IMR-90 (cell line): ENCODE measurements at regions of chr1 and their contacts with region 1.

Region 1: DNA sequence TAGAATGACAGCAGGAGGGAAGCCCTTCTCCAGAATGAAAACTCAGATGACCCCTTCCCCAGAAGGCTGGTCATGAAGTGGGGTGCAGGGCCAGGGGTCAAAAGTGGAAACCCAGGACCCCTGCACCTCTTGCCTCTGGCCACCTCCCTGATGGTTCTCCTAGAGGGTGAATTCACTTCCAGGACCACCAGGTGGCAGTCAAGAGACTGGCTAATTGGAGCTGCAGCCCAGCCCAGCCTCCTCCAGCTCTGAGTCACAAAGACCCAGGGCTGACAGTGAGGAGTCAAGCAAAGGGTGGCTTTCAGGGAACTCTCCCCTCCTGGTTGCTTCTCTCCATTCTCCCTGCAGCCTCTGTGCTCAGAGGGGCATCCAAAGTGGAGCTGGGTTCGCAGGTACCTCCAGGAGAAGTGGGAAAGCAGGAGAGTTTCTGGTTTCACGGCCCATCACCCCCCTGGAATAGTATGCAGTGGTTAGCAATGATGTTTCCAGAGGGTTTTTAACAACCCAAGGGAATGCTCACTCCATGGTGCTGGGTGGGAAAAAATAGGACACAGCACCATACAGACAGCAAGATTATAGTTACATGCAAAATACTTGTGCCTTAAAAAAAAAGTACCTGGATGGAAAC is 6.1 kb upstream of the EPHB2 start:
- DNase-seq: peak; percentile 84
- ATAC-seq: peak; percentile 100
- H3K4me3 ChIP-seq: no peak overlapping the region
- H3K27ac ChIP-seq: no peak overlapping the region
- H3K4me1 ChIP-seq: 0 out of 2 replicates have a peak, but pooled peaks cover 1% of the 10 kb centered on the region
- H3K27me3 ChIP-seq: peaks cover 2% of the 10 kb centered on the region; the same call in 1 of the 2 replicates
- CTCF ChIP-seq: peak; percentile 91
- POLR2A ChIP-seq: 0 out of 2 replicates have a peak, but pooled peaks have one; percentile 33
- RAD21 ChIP-seq: peak; percentile 95

Region 2: DNA sequence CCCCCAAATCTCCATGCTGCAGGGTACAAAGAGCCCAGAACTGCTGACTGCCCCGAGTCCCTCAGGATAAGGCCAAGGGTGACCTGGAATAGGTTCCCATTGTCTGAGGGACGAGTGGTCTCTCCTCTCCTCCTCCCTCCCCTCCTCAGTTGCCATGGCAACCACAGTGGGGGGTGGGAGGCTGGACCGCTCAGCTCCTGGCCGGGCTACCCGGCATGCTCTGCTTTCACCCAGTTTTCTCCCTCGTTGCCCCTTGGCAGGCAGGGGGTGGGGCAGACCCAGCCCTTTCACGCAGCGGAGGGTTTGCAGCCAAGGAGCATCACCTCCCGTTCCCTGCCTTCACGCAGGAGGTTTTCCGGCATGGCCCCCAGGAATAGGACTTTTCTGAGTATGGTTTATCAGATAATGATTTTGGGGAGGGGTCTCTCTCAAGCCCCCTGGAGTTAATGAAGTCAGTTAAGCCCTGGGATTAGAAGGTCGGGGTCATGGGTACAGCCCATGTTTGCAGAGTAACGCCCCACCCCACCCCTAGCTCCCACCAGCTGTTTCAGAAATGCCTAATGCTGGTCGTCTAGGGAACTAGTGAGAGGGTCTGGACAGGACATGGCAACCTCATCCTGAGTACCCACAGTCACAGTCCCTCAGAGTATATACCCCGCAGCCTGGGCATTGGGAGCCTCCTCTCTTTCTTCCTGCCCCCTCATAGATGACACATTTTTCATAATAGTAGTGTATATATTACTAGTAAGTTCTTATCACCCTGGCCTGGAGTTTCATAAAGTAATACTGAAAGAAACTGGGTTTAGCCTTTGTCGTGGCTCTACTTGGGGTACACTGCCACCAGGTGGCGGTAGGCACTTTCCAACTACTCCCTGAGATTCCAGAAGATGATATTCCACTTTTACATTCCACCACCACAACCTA is 30.8 kb before region 1 on chr1:
- CTCF ChIA-PET with region 1: interaction called, 4 read pairs
- POLR2A ChIA-PET with region 1: no interaction called
- dilution Hi-C with region 1: no loop called
- in situ Hi-C with region 1: no loop called
- intact Hi-C with region 1: loop called (anchors 2 kb)
- DNase-seq: peak; percentile 74
- ATAC-seq: peak; percentile 91
- H3K4me3 ChIP-seq: no peak overlapping the region
- H3K27ac ChIP-seq: no peak overlapping the region
- H3K4me1 ChIP-seq: no peaks in the 10 kb centered on the region
- H3K27me3 ChIP-seq: peaks cover 42% of the 10 kb centered on the region
- CTCF ChIP-seq: peak; percentile 96
- POLR2A ChIP-seq: no peak
- RAD21 ChIP-seq: peak; percentile 96

Region 3: DNA sequence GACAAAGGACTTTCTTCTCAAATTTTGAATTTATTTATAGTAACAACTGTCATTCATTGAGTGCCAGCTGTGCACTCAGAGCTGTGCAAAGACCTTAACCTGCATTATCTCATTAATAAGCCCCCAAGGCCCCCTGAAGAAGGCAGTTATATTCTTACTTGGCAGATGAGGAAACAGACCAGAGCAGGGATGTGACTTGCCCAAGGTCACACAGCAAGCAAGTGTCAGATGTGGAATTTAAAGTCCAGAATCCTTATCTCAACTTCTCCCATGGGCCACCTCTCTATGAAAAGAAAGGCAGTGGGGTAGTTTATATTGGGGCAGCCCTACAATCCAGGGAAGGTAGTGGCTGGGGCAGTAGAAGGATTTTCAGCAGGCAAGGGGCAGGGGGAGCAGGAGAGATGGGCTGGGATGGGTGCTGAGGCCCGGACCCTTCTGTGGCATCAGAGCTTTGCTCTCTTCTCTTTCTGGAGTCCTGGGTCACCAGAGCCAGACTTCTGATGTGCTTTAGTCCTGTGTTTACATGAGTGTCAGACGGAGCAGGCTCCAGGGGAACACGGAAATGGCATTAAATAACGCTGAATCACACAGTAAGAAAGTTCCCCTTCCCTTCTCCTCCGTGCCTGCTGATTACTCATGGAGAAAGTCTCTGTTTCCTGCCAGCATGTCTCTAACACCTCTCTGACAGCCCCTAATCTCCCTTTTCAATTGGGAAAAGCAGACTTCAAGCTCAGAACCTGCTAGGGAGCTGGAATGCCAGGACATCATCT is 45.5 kb after region 1 on chr1:
- CTCF ChIA-PET with region 1: interaction called, 4 read pairs
- POLR2A ChIA-PET with region 1: no interaction called
- dilution Hi-C with region 1: no loop called
- in situ Hi-C with region 1: no loop called
- intact Hi-C with region 1: loop called (anchors 2 kb)
- DNase-seq: peak; percentile 98
- ATAC-seq: peak; percentile 85
- H3K4me3 ChIP-seq: no peak overlapping the region
- H3K27ac ChIP-seq: peak overlapping the region; percentile 73
- H3K4me1 ChIP-seq: peaks cover 50% of the 10 kb centered on the region
- H3K27me3 ChIP-seq: no peaks in the 10 kb centered on the region
- CTCF ChIP-seq: no peak
- POLR2A ChIP-seq: peak; percentile 67
- RAD21 ChIP-seq: peak; percentile 0

Region 4: DNA sequence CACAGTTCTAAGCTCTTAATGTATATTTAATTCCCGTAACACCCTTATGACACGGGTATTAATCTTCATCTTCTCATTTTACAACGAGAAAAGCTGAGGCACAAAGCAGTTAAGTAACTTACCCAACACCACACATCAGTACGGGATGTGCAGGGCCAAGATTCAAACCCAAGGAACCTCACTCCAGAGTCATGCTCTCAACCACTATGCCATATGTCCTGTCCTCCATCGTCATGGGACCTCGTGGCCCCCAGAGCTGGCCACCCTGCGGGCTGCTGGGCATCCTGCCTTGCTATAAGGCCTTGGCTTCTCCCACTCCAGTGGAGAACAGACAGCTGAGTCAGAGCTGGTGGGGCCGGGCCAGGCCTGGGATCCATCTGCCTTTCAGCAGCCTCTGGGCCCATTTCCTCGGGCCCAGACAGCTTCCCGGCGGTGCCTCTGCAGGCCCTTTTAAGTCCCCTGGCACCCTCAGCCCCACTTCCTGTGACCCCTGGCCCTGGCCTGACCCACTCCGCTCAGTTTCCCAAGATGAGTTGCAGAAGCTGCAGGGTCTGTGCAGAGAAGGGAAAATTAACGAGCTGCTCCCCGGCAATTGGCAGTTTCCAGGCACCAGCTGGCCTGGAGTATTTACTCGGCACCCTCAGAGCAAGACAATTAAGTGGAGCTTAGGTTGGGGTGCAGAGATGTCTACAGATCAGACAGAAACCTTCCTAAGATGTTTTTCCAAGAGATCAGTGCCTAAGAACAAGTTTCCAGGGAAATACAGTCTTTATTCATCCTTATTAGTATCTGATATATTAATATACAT is 104.3 kb after region 1 on chr1:
- CTCF ChIA-PET with region 1: interaction called, 4 read pairs
- POLR2A ChIA-PET with region 1: no interaction called
- dilution Hi-C with region 1: no loop called
- in situ Hi-C with region 1: no loop called
- intact Hi-C with region 1: loop called (anchors 2 kb)
- DNase-seq: peak; percentile 87
- ATAC-seq: peak; percentile 90
- H3K4me3 ChIP-seq: no peak overlapping the region
- H3K27ac ChIP-seq: peak overlapping the region; percentile 18
- H3K4me1 ChIP-seq: peaks cover 11% of the 10 kb centered on the region
- H3K27me3 ChIP-seq: no peaks in the 10 kb centered on the region
- CTCF ChIP-seq: no peak
- POLR2A ChIP-seq: no peak
- RAD21 ChIP-seq: peak; percentile 31; the same call in 1 of the 2 replicates

Region 5: GRCh38 chr1:22861764-22862440 is 157.3 kb after region 1 on chr1:
- CTCF ChIA-PET with region 1: interaction called, 31 read pairs
- POLR2A ChIA-PET with region 1: no interaction called
- dilution Hi-C with region 1: no loop called
- in situ Hi-C with region 1: no loop called
- intact Hi-C with region 1: loop called (anchors 1 kb)
- DNase-seq: peak; percentile 80
- ATAC-seq: peak; percentile 98
- H3K4me3 ChIP-seq: no peak overlapping the region
- H3K27ac ChIP-seq: peak overlapping the region; percentile 30
- H3K4me1 ChIP-seq: peaks cover 7% of the 10 kb centered on the region
- H3K27me3 ChIP-seq: no peaks in the 10 kb centered on the region
- CTCF ChIP-seq: peak; percentile 94
- POLR2A ChIP-seq: no peak
- RAD21 ChIP-seq: peak; percentile 86

Region 6: GRCh38 chr1:22889213-22889827 is 184.8 kb after region 1 on chr1:
- CTCF ChIA-PET with region 1: interaction called, 6 read pairs
- POLR2A ChIA-PET with region 1: no interaction called
- dilution Hi-C with region 1: no loop called
- in situ Hi-C with region 1: loop called (anchors 10 kb)
- intact Hi-C with region 1: loop called (anchors 1 kb)
- DNase-seq: peak; percentile 51
- ATAC-seq: peak; percentile 70
- H3K4me3 ChIP-seq: no peak overlapping the region
- H3K27ac ChIP-seq: no peak overlapping the region
- H3K4me1 ChIP-seq: peaks cover 5% of the 10 kb centered on the region; the same call in 1 of the 2 replicates
- H3K27me3 ChIP-seq: no peaks in the 10 kb centered on the region
- CTCF ChIP-seq: peak; percentile 74
- POLR2A ChIP-seq: no peak
- RAD21 ChIP-seq: peak; percentile 78

Region 7: DNA sequence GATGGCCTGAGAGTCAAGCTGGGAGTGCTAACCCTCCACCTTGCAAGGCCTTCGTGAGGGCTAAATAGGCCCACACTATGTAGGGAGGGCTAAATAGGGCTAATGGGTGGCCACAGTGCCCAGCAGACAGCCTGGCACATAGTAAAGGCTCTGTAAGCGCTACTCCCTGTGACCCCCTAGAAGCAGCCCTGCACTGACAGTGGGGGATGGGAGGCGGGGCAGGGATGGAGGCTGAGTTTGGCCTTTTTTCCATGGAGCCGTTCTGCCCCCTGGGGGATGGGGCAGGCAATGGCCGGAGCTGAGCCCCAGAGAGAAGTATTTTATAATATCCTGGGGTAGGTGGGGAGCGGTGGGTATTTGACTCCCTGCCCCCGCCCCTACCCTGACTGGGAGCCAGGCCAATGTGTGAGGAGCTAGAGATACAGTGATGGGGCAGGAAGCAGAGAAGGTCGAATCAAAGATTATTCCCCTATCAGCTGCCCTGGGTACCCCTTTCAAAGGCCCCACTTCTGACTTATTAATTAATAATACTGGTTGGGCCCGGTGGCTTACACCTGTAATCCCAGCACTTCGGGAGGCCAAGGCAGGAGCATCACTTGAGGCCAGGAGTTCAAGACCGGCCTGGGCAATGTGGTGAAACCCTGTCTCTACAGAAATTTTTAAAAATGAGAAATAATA is 225.8 kb after region 1 on chr1:
- CTCF ChIA-PET with region 1: interaction called, 5 read pairs
- POLR2A ChIA-PET with region 1: no interaction called
- dilution Hi-C with region 1: no loop called
- in situ Hi-C with region 1: no loop called
- intact Hi-C with region 1: loop called (anchors 1 kb)
- DNase-seq: peak; percentile 17
- ATAC-seq: peak; percentile 96
- H3K4me3 ChIP-seq: no peak overlapping the region
- H3K27ac ChIP-seq: no peak overlapping the region
- H3K4me1 ChIP-seq: no peaks in the 10 kb centered on the region
- H3K27me3 ChIP-seq: peaks cover 43% of the 10 kb centered on the region
- CTCF ChIP-seq: peak; percentile 92
- POLR2A ChIP-seq: no peak
- RAD21 ChIP-seq: peak; percentile 90

Region 8: DNA sequence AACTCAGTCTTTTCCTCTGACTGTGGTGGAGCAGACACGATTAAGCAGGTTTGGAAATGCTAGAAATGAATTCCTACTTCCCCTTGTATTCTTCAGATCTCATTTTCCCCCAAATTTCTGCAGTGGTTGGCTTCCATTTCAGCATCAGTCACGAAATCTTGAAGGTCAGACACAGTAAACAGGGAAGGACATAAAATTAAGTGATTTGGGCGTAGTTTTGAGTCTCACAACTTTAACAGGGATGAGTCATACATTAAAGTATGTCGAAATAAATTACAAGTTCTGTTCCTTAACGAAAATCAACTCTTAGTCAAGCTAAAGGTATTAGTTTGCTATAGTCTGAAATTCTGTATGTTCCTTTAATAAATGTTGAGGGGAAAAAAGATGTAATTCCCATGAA is 578.4 kb after region 1 on chr1:
- CTCF ChIA-PET with region 1: no interaction called
- POLR2A ChIA-PET with region 1: no interaction called
- dilution Hi-C with region 1: no loop called
- in situ Hi-C with region 1: no loop called
- intact Hi-C with region 1: no loop called
- DNase-seq: peak; percentile 79
- ATAC-seq: peak; percentile 72
- H3K4me3 ChIP-seq: no peak overlapping the region
- H3K27ac ChIP-seq: peak overlapping the region; percentile 2; the same call in 1 of the 2 replicates
- H3K4me1 ChIP-seq: peaks cover 8% of the 10 kb centered on the region; the same call in 1 of the 2 replicates
- H3K27me3 ChIP-seq: no peaks in the 10 kb centered on the region
- CTCF ChIP-seq: no peak
- POLR2A ChIP-seq: no peak
- RAD21 ChIP-seq: no peak